Calu3 (cell line): ENCODE measurements at regions of chr2 and their contacts with region 1.

Region 1: GRCh38 chr2:211408516-211408915 is 852.1 kb downstream of the CPS1 start:
- DNase-seq: peak; percentile 43
- H3K4me3 Mint-ChIP-seq: peak overlapping the region; percentile 66
- H3K27ac Mint-ChIP-seq: peak overlapping the region; percentile 99
- H3K4me1 Mint-ChIP-seq: peaks cover 70% of the 10 kb centered on the region
- H3K27me3 Mint-ChIP-seq: no peaks in the 10 kb centered on the region
- CTCF ChIP-seq: no peak

Region 2: GRCh38 chr2:211132586-211132985 is 275.9 kb before region 1 on chr2:
- CTCF ChIA-PET with region 1: no interaction called
- intact Hi-C with region 1: loop called (anchors 2 kb)
- DNase-seq: no peak
- H3K4me3 Mint-ChIP-seq: no peak overlapping the region
- H3K27ac Mint-ChIP-seq: peak overlapping the region; percentile 86
- H3K4me1 Mint-ChIP-seq: peaks cover 48% of the 10 kb centered on the region
- H3K27me3 Mint-ChIP-seq: no peaks in the 10 kb centered on the region
- CTCF ChIP-seq: no peak

Region 3: DNA sequence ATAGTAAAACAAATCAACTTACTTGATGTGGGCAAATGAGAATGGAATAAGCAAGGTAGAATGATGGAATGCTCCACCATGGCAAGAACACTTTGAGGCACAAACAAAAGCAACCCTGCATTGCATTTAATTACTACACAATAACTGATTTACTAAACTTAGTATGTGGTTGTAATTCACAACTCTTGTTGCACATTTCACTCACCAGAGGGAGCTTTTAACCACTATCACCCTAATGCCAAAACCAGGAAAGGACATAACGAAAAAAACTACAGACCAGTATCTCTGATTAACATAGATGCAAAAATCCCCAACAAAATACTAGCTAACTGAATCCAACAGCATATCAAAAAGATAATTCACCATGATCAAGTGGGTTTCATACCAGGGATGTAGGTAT is 192.3 kb before region 1 on chr2:
- CTCF ChIA-PET with region 1: no interaction called
- intact Hi-C with region 1: loop called (anchors 5 kb)
- DNase-seq: peak; percentile 6
- H3K4me3 Mint-ChIP-seq: no peak overlapping the region
- H3K27ac Mint-ChIP-seq: no peak overlapping the region
- H3K4me1 Mint-ChIP-seq: no peaks in the 10 kb centered on the region
- H3K27me3 Mint-ChIP-seq: no peaks in the 10 kb centered on the region
- CTCF ChIP-seq: peak; percentile 25

Region 4: GRCh38 chr2:211248847-211249246 is 159.7 kb before region 1 on chr2:
- CTCF ChIA-PET with region 1: no interaction called
- intact Hi-C with region 1: no loop called
- DNase-seq: peak; percentile 12
- H3K4me3 Mint-ChIP-seq: no peak overlapping the region
- H3K27ac Mint-ChIP-seq: peak overlapping the region; percentile 87
- H3K4me1 Mint-ChIP-seq: peaks cover 29% of the 10 kb centered on the region
- H3K27me3 Mint-ChIP-seq: no peaks in the 10 kb centered on the region
- CTCF ChIP-seq: no peak

Region 5: DNA sequence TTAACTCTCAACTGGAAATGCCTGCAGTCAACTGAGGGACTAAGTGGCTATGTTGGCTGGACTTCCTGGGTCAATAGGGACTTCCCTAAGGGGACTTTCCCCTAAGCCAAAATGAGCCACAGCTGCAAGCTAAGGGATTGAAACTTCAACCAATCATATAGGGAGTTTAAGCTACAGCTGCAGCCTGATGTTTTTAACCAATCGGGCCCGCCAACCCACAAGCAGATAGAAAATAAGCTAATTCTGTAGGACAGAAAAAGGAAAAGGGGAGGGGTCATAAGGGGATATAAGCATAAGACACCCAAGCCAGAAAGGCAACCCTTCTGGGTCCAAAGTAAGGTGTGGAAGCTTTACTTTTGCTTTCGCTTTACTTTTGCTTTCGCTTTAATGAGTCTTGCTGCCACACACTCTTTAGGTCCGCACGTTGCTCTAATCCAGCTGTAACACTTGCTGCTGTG is 202.6 kb after region 1 on chr2:
- CTCF ChIA-PET with region 1: no interaction called
- intact Hi-C with region 1: no loop called
- DNase-seq: no peak
- H3K4me3 Mint-ChIP-seq: no peak overlapping the region
- H3K27ac Mint-ChIP-seq: no peak overlapping the region
- H3K4me1 Mint-ChIP-seq: no peaks in the 10 kb centered on the region
- H3K27me3 Mint-ChIP-seq: no peaks in the 10 kb centered on the region
- CTCF ChIP-seq: no peak